BJ (cell line): ENCODE measurements at regions of chr9 and their contacts with region 1.

Region 1: GRCh38 chr9:33924978-33925797 is 108.2 kb downstream of the UBE2R2 start:
- DNase-seq: no peak
- H3K4me3 ChIP-seq: no peak overlapping the region
- H3K27me3 ChIP-seq: no peaks in the 10 kb centered on the region
- CTCF ChIP-seq: peak; percentile 72

Region 2: DNA sequence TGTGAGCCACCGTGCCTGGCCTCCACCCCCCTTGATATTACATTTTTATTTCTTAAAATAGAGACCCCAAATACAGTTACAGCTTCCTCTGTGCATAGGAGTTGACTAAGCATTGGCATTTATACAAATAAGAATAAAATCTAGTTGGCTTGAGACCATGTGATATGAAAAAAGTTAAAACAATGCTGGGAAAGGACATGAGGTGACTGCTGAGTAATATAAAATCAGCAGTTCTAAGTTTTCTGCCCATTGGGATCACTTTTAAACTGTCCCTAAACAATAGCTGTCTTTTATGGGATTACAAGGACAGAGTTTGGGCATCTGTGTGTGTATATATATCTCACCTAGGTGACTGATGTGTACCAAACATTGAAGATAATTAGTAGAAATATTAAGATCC is 11.6 kb before region 1 on chr9:
- CTCF ChIA-PET with region 1: interaction called, 11 read pairs
- POLR2A ChIA-PET with region 1: no interaction called
- DNase-seq: no peak
- H3K4me3 ChIP-seq: no peak overlapping the region
- H3K27me3 ChIP-seq: no peaks in the 10 kb centered on the region
- CTCF ChIP-seq: no peak